Head of caudate nucleus (tissue), 42 donors: ENCODE measurements at regions of chr1 and their contacts with region 1.

Region 1: GRCh38 chr1:46527474-46528296 is 23.8 kb downstream of the KNCN start:
- DNase-seq: peak; percentile 69 to 95 (median 88)

Region 2: GRCh38 chr1:46340404-46341221 is 187.1 kb before region 1 on chr1 and contains the start of gene NSUN4:
- intact Hi-C with region 1: no loop called
- DNase-seq: peak; percentile 88 to 98 (median 93)

Region 3: GRCh38 chr1:46442317-46443161 is 85.1 kb before region 1 on chr1:
- intact Hi-C with region 1: loop called (anchors 5 kb)
- DNase-seq: peak; percentile 30 to 88 (median 72)

Region 4: GRCh38 chr1:46477153-46477929 is 50.3 kb before region 1 on chr1:
- intact Hi-C with region 1: loop called (anchors 5 kb)
- DNase-seq: peak; percentile 40 to 91 (median 81)